Naive thymus-derived CD4-positive, alpha-beta T cell (primary cell): ENCODE measurements at regions of chr3 and their contacts with region 1.

Region 1: DNA sequence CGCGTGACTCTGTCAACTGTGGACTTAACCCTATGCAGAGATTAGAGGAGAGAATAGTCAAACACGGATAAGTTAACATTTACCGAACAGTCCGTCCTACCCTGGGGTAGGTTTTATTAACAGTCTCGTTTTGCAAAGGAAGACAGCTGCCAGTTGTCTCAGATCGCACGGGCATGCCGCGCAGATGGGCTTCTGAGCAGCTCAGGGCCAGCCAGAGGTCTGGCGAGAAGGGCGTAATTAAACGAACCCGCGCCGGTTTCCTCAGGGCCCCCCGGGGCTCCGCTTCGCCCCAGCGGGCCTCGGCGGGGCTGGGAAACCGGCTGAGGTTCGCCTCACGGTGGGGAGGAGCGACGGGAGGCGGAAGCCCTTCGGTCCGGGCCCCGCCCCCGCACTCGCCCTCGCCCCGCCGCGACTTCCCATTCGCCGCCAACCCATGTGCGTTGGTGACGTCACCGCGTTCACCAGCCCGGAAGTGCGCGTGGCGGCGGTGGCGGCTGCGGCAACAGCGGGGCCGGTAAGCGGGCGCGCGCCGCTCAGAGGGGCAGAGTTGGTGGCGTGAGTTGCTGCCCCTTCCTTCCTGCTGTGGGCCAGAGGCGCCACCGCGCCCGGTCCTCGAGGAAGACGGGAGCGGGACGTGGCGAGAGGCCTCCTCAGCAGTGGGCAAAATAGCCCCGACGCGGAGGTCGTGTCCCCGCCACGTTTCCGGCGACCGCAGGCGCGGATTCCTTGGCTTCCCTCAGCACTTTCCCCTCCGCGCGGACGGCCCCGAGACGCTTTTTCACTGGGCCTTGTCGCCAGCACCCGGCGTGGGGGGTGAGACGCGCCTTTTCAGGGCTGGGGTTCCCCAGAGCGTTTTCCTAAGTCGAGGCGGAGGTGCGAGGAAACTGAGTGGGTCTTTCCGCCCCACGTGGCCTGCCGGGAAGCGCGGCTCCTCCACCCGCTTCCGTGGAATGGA is at the start of gene TRNT1:
- DNase-seq: peak; percentile 92 to 97 (median 96)
- ATAC-seq: peak; percentile 97
- H3K4me3 ChIP-seq: peak within 1 kb of the TSS; percentile 92
- H3K4me3 Mint-ChIP-seq: peak within 1 kb of the TSS; percentile 94 to 100 (median 96)
- H3K27ac ChIP-seq: peak within 1 kb of the TSS; percentile 96
- H3K27ac Mint-ChIP-seq: peak within 1 kb of the TSS; percentile 96 to 99 (median 97)
- H3K4me1 ChIP-seq: peaks cover 10 to 25% of the 10 kb centered on the region in 2 donors
- H3K4me1 Mint-ChIP-seq: peaks cover 12 to 48% (median 42%) of the 10 kb centered on the region in 7 donors
- H3K27me3 ChIP-seq: no peaks in the 10 kb centered on the region
- H3K27me3 Mint-ChIP-seq: no peaks in the 10 kb centered on the region
- total RNA-seq, gene TRNT1: 36.4 to 44.5 (median 38.8) TPM

Region 2: DNA sequence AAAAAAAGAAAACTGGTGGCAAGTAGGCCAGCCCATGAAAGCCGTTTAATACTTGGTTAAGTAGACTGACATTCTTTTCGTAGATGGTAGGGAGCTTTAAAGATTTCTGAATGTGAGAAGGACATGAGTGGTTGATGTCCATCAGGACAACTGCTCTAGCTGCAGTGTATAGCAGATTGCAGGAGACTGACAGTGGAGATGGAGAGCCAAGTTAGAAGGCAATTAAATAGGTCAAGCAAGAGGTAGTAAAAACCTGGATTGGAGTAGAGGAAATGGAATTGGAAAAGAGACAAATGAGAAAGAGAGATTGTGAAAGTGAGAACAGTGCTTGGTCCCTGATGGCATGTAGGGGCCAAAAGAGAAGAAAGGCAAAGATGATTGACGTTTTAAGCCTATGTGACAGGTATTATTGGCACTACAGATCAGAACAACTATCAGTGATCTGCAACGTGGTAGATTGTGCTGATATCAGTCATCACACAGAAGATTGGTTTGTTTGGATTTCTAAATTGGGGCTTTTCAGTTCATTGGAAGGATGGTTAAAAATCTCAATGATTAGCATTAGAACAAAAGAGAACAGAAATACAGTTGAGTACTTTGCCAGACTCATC is 954.1 kb before region 1 on chr3:
- CTCF ChIA-PET with region 1: no interaction called
- POLR2A ChIA-PET with region 1: no interaction called
- intact Hi-C with region 1: no loop called
- DNase-seq: no peak
- ATAC-seq: no peak
- H3K4me3 ChIP-seq: no peak overlapping the region
- H3K4me3 Mint-ChIP-seq: no peak overlapping the region
- H3K27ac ChIP-seq: no peak overlapping the region
- H3K27ac Mint-ChIP-seq: no peak overlapping the region
- H3K4me1 ChIP-seq: no peaks in the 10 kb centered on the region
- H3K4me1 Mint-ChIP-seq: peaks cover 0 to 1% (median 0%) of the 10 kb centered on the region in 7 donors
- H3K27me3 ChIP-seq: no peaks in the 10 kb centered on the region
- H3K27me3 Mint-ChIP-seq: no peaks in the 10 kb centered on the region

Region 3: GRCh38 chr3:3027976-3028567 is 98.7 kb before region 1 on chr3:
- CTCF ChIA-PET with region 1: no interaction called
- POLR2A ChIA-PET with region 1: no interaction called
- intact Hi-C with region 1: loop called in 1 of 2 experiments (anchors 2 kb)
- DNase-seq: peak in 7 of 9 donors; percentile 4 to 43 (median 24)
- ATAC-seq: peak; percentile 46
- H3K4me3 ChIP-seq: no peak overlapping the region
- H3K4me3 Mint-ChIP-seq: peak overlapping the region in 7 of 10 donors; percentile 7 to 55 (median 37)
- H3K27ac ChIP-seq: no peak overlapping the region
- H3K27ac Mint-ChIP-seq: peak overlapping the region in 3 of 9 donors; percentile 3 to 23 (median 21)
- H3K4me1 ChIP-seq: peaks cover 5 to 8% of the 10 kb centered on the region in 2 donors
- H3K4me1 Mint-ChIP-seq: peaks cover 3 to 18% (median 13%) of the 10 kb centered on the region in 7 donors
- H3K27me3 ChIP-seq: no peaks in the 10 kb centered on the region
- H3K27me3 Mint-ChIP-seq: peaks cover 0 to 12% (median 0%) of the 10 kb centered on the region in 5 donors

Region 4: DNA sequence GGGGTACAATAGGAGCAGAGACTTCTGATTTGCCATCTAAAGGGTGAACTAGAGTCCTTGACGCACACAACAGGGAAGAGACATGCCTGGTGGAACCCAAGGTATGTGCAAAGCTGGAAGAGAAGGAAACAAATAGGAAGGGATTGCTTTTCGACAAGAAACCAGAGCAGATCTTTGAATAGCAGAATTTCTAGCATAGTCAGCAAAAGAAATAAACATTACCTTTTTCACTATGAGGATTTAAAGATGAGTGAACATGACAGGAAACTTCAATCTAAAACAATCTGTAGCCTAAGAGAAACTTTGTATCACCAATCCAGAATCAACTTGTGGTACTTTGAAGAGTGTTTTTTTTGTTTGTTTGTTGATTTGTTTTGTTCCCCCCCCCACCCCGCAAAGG is 21.5 kb before region 1 on chr3:
- CTCF ChIA-PET with region 1: no interaction called
- POLR2A ChIA-PET with region 1: no interaction called
- intact Hi-C with region 1: no loop called
- DNase-seq: no peak
- ATAC-seq: no peak
- H3K4me3 ChIP-seq: no peak overlapping the region
- H3K4me3 Mint-ChIP-seq: no peak overlapping the region
- H3K27ac ChIP-seq: no peak overlapping the region
- H3K27ac Mint-ChIP-seq: no peak overlapping the region
- H3K4me1 ChIP-seq: no peaks in the 10 kb centered on the region
- H3K4me1 Mint-ChIP-seq: peaks cover 0 to 6% (median 0%) of the 10 kb centered on the region in 7 donors
- H3K27me3 ChIP-seq: no peaks in the 10 kb centered on the region
- H3K27me3 Mint-ChIP-seq: peaks cover 0 to 15% (median 9%) of the 10 kb centered on the region in 5 donors

Region 5: DNA sequence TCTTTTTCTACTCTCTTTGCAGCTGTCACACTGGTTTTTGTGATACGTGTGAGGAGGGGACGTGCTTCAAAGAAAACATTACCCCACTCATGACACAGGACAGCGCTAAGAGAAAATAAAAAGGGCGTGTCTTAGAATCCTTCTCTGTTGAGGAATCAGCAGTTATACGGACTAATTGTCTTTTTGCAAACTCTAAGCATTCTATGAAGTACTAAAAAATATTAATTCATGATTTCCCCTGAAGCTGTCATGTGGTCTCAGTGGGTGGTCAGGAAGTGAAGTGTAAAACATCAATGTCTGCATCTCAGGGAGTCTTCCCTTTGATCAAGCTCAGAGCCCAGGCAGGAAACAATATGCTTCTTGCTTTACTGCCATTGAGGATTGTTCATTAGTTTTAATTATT is 170.2 kb after region 1 on chr3:
- CTCF ChIA-PET with region 1: no interaction called
- POLR2A ChIA-PET with region 1: no interaction called
- intact Hi-C with region 1: loop called in 1 of 2 experiments (anchors 5 kb)
- DNase-seq: peak in 7 of 9 donors; percentile 12 to 60 (median 48)
- ATAC-seq: peak; percentile 76
- H3K4me3 ChIP-seq: no peak overlapping the region
- H3K4me3 Mint-ChIP-seq: peak overlapping the region; percentile 48 to 85 (median 74)
- H3K27ac ChIP-seq: peak overlapping the region; percentile 45
- H3K27ac Mint-ChIP-seq: peak overlapping the region in 8 of 9 donors; percentile 66 to 93 (median 83)
- H3K4me1 ChIP-seq: peaks cover 0 to 12% of the 10 kb centered on the region in 2 donors
- H3K4me1 Mint-ChIP-seq: peaks cover 7 to 44% (median 30%) of the 10 kb centered on the region in 7 donors
- H3K27me3 ChIP-seq: no peaks in the 10 kb centered on the region
- H3K27me3 Mint-ChIP-seq: peaks cover 0 to 3% (median 0%) of the 10 kb centered on the region in 5 donors

Region 6: DNA sequence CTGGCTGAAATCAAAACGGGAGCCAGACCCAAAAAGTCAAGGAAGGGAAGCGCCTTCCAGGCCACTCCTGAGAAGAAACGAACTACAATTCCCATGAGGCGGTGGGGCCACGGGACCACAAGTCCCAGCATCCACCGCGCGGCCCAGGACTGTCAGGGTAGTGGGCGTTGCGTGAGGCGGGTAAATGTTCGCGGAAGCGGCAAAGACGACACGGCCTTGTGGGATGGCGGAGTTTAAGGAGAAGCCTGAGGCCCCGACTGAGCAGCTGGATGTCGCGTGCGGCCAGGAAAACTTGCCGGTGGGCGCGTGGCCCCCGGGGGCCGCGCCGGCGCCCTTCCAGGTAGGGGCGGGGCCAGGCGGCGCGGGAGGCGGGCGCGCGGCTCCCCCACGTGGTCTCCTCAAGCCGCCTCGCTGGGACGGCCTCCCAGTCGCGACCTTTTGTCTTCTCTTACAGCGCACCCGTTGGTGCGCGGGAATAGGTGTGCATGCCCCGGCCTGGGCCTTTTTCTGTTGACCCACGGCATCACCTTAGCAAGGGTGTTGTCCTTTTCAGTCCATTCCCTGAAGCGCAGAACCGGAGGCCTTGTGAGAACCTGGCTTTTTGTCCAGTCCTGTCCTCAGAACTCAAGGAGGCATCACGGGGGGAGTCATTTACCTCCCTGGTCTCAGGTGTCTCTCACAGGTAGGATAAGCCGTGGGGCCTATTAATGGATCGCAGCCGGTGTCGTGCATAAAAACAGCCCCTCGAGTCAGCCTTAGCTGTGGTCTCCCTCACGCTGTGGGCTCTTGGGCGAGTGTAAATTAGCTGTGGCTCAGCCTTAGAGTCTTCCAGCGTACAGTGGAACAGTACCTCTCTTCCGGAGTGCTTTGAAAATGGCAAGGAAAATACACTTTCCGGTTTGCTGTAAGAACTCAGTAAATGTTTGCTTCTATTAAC is 1176.7 kb after region 1 on chr3 and contains the start of gene SETMAR:
- CTCF ChIA-PET with region 1: no interaction called
- POLR2A ChIA-PET with region 1: no interaction called
- intact Hi-C with region 1: loop called (anchors 1 kb)
- DNase-seq: peak; percentile 73 to 86 (median 82)
- ATAC-seq: peak; percentile 97
- H3K4me3 ChIP-seq: peak within 1 kb of the TSS; percentile 92
- H3K4me3 Mint-ChIP-seq: peak within 1 kb of the TSS; percentile 88 to 99 (median 97)
- H3K27ac ChIP-seq: peak within 1 kb of the TSS; percentile 91
- H3K27ac Mint-ChIP-seq: peak within 1 kb of the TSS; percentile 92 to 99 (median 98)
- H3K4me1 ChIP-seq: peaks cover 0 to 8% of the 10 kb centered on the region in 2 donors
- H3K4me1 Mint-ChIP-seq: peaks cover 8 to 45% (median 34%) of the 10 kb centered on the region in 7 donors
- H3K27me3 ChIP-seq: no peaks in the 10 kb centered on the region
- H3K27me3 Mint-ChIP-seq: no peaks in the 10 kb centered on the region
- total RNA-seq, gene SETMAR: 6.4 to 13.7 (median 12.5) TPM

Region 7: DNA sequence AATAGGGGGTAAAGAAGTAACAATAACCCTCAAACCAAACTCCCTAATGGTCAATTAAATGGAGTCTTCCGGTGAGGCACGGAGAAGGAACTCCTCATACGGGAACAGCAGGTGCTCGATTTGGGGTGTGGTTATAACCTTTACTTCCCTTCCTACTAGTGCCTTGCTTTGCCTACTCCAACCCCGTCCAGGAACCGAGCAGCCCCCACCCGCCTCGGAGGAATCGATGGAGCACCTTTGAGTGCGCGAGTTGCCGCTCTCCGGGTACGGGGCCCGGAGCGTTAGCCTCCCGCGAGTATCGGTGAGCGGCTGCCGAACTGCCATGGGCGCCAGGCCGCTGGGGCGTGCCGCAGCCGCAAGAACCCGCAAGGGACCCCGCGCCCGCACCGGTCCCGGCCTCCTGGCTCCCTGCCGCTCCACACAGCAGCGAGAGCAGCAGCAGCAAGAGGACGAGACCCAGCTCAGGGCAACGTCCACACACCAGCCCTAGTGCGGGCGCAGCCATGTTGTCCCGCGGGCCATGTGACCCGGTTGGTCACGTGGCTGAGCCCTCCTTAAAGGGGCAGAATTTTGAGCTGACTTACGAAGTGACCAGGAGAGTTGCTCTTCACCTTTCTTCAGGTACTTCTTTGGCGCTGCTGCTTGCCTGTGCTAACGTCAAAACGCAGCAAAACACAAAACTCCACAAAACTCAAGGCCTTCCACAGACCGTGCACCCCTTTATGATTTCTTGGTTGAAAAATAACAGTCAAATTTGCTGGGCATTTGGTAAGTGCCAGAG is 1340.2 kb after region 1 on chr3 and contains the start of gene SUMF1:
- CTCF ChIA-PET with region 1: no interaction called
- POLR2A ChIA-PET with region 1: no interaction called
- intact Hi-C with region 1: loop called in 1 of 2 experiments (anchors 2 kb)
- DNase-seq: peak; percentile 59 to 79 (median 70)
- ATAC-seq: peak; percentile 98
- H3K4me3 ChIP-seq: peak within 1 kb of the TSS; percentile 90
- H3K4me3 Mint-ChIP-seq: peak within 1 kb of the TSS; percentile 90 to 95 (median 92)
- H3K27ac ChIP-seq: peak within 1 kb of the TSS; percentile 77
- H3K27ac Mint-ChIP-seq: peak within 1 kb of the TSS; percentile 86 to 96 (median 94)
- H3K4me1 ChIP-seq: peaks cover 5 to 7% of the 10 kb centered on the region in 2 donors
- H3K4me1 Mint-ChIP-seq: peaks cover 12 to 38% (median 21%) of the 10 kb centered on the region in 7 donors
- H3K27me3 ChIP-seq: no peaks in the 10 kb centered on the region
- H3K27me3 Mint-ChIP-seq: peaks cover 0 to 2% (median under 1%) of the 10 kb centered on the region in 5 donors
- total RNA-seq, gene SUMF1: 9.2 to 20.0 (median 16.0) TPM